ENCODE measurements at regions of chr3 and their contacts with region 1.

Region 1: GRCh38 chr3:9422712-9423424 is 25.5 kb downstream of the SETD5 start:
- DNase-seq: peak; percentile 75 to 84
- H3K4me3 ChIP-seq: peak overlapping the region; percentile 21; the same call in 1 of the 2 replicates
- H3K27ac ChIP-seq: peak overlapping the region; percentile 90
- H3K4me1 ChIP-seq: peaks cover 53% of the 10 kb centered on the region
- H3K27me3 ChIP-seq: no peaks in the 10 kb centered on the region
- CTCF ChIP-seq: peak; percentile 70

Region 2: DNA sequence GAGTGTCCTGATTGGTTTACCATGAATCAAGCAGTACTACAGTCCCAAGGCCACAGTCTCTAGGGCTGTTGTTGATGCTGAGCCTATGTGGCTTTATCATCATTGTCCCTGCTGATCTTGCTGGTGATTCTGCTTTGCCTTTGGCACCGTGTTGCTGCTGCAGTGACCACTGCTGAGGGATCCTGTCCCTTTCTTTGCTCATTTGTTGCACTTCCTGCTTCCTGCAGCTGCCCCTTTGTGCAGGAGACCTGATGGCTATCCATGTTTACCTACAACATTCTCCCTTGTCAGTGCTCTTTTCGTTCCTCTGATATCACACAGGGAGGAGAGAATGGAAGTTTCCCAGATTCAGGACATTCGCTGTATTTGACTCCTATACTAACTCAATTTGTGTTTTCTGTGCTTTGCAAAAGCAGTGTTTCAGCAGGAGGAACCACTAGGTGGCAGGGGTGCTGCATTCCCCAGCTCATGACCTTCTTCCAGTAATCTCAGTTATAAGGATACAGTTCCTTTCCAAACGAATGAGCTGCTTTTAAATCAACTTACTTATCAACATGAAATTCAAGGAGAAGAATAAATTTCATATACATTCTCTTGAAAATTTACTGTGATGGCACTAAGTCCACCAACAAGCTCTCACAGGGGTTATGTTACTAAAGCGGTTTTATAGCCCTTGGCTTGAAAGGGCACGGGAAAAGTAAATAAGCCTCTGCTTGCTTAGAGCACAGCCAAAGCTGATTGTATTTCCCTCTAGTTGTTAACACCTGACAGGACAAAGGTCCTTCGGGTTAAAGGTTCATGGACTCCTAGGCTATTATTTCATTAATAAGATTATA is 69.7 kb before region 1 on chr3:
- CTCF ChIA-PET with region 1: interaction called, 4 read pairs
- POLR2A ChIA-PET with region 1: no interaction called
- intact Hi-C with region 1: loop called (anchors 5 kb)
- DNase-seq: peak; percentile 62 to 71
- H3K4me3 ChIP-seq: no peak overlapping the region
- H3K27ac ChIP-seq: peak overlapping the region; percentile 48
- H3K4me1 ChIP-seq: peaks cover 69% of the 10 kb centered on the region
- H3K27me3 ChIP-seq: no peaks in the 10 kb centered on the region
- CTCF ChIP-seq: peak; percentile 91

Region 3: DNA sequence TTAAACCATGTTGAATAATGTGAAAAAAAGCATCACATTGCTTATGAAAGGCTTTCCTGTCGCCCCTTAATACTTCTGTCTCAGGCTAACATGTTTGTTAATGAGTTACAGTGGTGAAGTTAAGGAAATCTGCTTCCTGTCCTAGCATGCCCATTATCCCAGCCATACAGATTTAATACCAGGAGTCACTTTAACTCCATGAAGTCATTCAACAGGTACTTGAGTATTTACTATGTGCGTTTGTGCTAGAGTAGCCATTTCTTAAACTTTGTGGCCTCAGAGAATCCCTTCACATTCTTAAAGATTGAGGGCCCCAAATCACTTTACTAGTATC is 35.6 kb before region 1 on chr3:
- CTCF ChIA-PET with region 1: interaction called, 3 read pairs
- POLR2A ChIA-PET with region 1: no interaction called
- intact Hi-C with region 1: loop called (anchors 5 kb)
- DNase-seq: no peak
- H3K4me3 ChIP-seq: no peak overlapping the region
- H3K27ac ChIP-seq: no peak overlapping the region; the same call in 1 of the 2 replicates
- H3K4me1 ChIP-seq: no peaks in the 10 kb centered on the region
- H3K27me3 ChIP-seq: no peaks in the 10 kb centered on the region
- CTCF ChIP-seq: no peak

Region 4: GRCh38 chr3:9396700-9397521 is 26.0 kb before region 1 on chr3:
- CTCF ChIA-PET with region 1: interaction called, 4 read pairs
- POLR2A ChIA-PET with region 1: interaction called, 10 read pairs
- intact Hi-C with region 1: loop called (anchors 1 kb)
- DNase-seq: peak; percentile 95 to 98
- H3K4me3 ChIP-seq: peak overlapping the region; percentile 63
- H3K27ac ChIP-seq: peak overlapping the region; percentile 91
- H3K4me1 ChIP-seq: peaks cover 60% of the 10 kb centered on the region
- H3K27me3 ChIP-seq: no peaks in the 10 kb centered on the region
- CTCF ChIP-seq: no peak

Region 5: GRCh38 chr3:9402410-9403228 is 20.2 kb before region 1 on chr3:
- CTCF ChIA-PET with region 1: interaction called, 4 read pairs
- POLR2A ChIA-PET with region 1: interaction called, 11 read pairs
- intact Hi-C with region 1: no loop called
- DNase-seq: no peak
- H3K4me3 ChIP-seq: peak overlapping the region; percentile 24; the same call in 1 of the 2 replicates
- H3K27ac ChIP-seq: no peak overlapping the region
- H3K4me1 ChIP-seq: peaks cover 60% of the 10 kb centered on the region
- H3K27me3 ChIP-seq: no peaks in the 10 kb centered on the region
- CTCF ChIP-seq: no peak

Region 6: GRCh38 chr3:9769426-9770275 is 346.8 kb after region 1 on chr3 and contains the start of gene CAMK1:
- CTCF ChIA-PET with region 1: no interaction called
- POLR2A ChIA-PET with region 1: interaction called, 12 read pairs
- intact Hi-C with region 1: no loop called
- DNase-seq: peak in 1 of 2 experiments; percentile 59
- H3K4me3 ChIP-seq: peak within 1 kb of the TSS; percentile 49; the same call in 1 of the 2 replicates
- H3K27ac ChIP-seq: no peak within 1 kb of the TSS
- H3K4me1 ChIP-seq: no peaks in the 10 kb centered on the region
- H3K27me3 ChIP-seq: peaks cover 7% of the 10 kb centered on the region; the same call in 1 of the 2 replicates
- CTCF ChIP-seq: no peak
- total RNA-seq, gene CAMK1: 2.0 and 3.1 TPM in 2 replicates